HCT116 (cell line): ENCODE measurements at regions of chr1 and their contacts with region 1.

Region 1: DNA sequence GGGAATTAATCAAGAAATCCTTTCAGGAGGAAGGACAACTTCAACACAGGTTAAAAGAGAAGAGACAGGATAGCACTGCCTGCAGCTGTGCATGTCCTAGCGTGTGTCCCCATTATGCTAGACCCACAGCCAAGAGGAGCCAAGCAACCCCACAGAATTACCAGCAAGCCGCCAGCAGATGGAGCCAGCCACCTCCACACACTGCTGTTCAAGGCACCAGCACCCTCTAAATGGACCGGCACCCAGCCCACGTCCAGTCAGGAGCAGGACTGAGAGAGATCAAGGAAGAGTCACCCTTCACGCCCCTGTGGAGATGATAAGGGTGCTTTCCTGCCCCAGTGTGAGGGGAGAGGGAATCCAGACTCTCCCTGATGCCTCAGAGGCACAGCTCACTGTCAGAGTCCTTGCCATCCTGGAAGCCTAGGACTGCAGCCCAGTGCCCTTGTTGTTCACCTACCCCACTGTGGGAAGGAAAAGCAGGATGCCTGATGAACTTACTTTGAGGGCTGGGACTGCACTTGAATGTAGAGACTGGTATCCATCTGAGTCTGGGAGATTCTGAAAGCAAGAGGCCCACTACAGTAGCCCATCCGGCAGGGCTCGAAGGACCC is 37.1 kb upstream of the CTTNBP2NL start:
- DNase-seq: peak; percentile 44
- ATAC-seq: peak; percentile 100
- H3K4me3 ChIP-seq: no peak overlapping the region
- H3K27ac ChIP-seq: no peak overlapping the region
- H3K4me1 ChIP-seq: no peaks in the 10 kb centered on the region
- H3K27me3 ChIP-seq: peaks cover 21% of the 10 kb centered on the region
- CTCF ChIP-seq: peak; percentile 73 to 87 (median 86)
- POLR2A ChIP-seq: no peak
- RAD21 ChIP-seq: peak; percentile 79

Region 2: GRCh38 chr1:112011215-112011614 is 347.7 kb before region 1 on chr1:
- CTCF ChIA-PET with region 1: no interaction called
- POLR2A ChIA-PET with region 1: no interaction called
- RAD21 ChIA-PET with region 1: no interaction called
- intact Hi-C with region 1: no loop called
- DNase-seq: no peak
- ATAC-seq: no peak
- H3K4me3 ChIP-seq: no peak overlapping the region
- H3K27ac ChIP-seq: no peak overlapping the region
- H3K4me1 ChIP-seq: no peaks in the 10 kb centered on the region
- H3K27me3 ChIP-seq: peaks cover 74% of the 10 kb centered on the region
- CTCF ChIP-seq: no peak
- POLR2A ChIP-seq: no peak
- RAD21 ChIP-seq: no peak

Region 3: GRCh38 chr1:112325504-112325903 is 33.4 kb before region 1 on chr1:
- CTCF ChIA-PET with region 1: no interaction called
- POLR2A ChIA-PET with region 1: no interaction called
- RAD21 ChIA-PET with region 1: no interaction called
- intact Hi-C with region 1: no loop called
- DNase-seq: no peak
- ATAC-seq: no peak
- H3K4me3 ChIP-seq: no peak overlapping the region
- H3K27ac ChIP-seq: no peak overlapping the region
- H3K4me1 ChIP-seq: no peaks in the 10 kb centered on the region
- H3K27me3 ChIP-seq: peaks cover 12% of the 10 kb centered on the region
- CTCF ChIP-seq: no peak
- POLR2A ChIP-seq: no peak
- RAD21 ChIP-seq: no peak

Region 4: DNA sequence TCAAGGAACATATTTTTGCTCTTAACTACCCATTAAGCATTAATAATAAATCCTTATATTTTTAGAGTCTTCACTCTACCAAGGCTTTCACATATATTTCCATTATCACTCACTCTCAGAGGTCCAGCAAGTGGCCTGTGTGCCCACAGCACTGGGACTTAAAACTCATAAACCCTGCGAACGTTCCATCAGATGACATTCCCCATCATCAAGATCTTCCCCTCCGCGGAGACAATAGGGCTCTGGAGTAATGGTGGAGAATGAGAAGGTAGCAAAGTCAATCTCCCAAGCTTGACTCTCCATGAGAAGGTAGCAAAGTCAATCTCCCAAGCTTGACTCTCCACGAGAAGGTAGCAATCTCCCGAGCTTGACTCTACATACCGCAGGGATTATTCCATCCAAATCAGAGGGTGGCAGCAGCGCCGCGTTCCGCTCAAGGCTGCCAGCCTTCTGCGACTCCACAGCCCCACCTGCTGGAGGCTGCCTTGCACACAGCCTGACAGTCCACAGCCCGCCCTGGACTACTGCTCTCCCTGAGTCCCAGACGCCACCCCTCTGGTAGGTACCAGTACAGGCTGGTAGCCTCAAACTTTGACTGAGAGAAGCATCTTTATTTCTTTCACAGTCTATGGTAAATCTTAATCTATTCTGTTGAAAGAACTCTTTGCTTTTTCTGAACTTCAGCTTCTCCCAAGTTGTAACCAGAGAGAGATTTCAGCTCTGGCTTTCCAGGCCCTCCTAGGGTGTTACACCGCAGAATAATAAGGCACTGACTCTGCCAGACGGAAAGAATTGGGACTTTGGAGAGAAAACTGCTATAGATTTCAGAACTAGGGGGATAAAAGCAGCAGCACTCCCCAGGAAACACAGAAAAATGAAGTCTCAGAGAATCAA is 10.7 kb after region 1 on chr1:
- CTCF ChIA-PET with region 1: interaction called, 19 read pairs
- POLR2A ChIA-PET with region 1: no interaction called
- RAD21 ChIA-PET with region 1: no interaction called
- intact Hi-C with region 1: no loop called
- DNase-seq: peak; percentile 76
- ATAC-seq: peak; percentile 100
- H3K4me3 ChIP-seq: peak overlapping the region in 1 of 2 experiments; percentile 21; a peak in 1 of 4 replicates
- H3K27ac ChIP-seq: no peak overlapping the region
- H3K4me1 ChIP-seq: peaks cover 0 to 4% of the 10 kb centered on the region in 2 experiments; a peak in 1 of 4 replicates
- H3K27me3 ChIP-seq: no peaks in the 10 kb centered on the region
- CTCF ChIP-seq: peak; percentile 97 to 99 (median 98)
- POLR2A ChIP-seq: no peak
- RAD21 ChIP-seq: peak; percentile 95